IMR-90 (cell line): ENCODE measurements at regions of chr2 and their contacts with region 1.

Region 1: DNA sequence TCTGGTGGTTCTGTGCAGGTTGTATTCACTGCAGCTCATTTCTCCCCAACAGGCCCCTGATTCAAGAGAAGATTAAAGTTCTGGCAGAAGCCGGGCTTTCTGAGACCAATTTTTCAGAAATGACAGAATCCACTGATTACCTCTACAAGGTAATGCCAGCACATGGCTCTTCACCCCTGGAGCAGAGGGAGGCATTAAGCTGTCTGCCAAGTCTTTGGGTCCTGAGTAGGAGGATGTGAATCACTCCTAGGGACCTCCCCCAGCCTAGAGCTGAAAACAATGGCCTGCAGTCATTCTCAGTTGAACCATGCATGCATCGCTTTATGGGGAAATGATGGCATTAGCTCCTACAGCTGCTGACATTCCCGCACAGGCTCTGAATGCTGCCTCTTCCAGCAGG is 20.5 kb upstream of the RPL37A start:
- DNase-seq: peak; percentile 88
- ATAC-seq: peak; percentile 91
- H3K4me3 ChIP-seq: no peak overlapping the region
- H3K27ac ChIP-seq: no peak overlapping the region
- H3K4me1 ChIP-seq: no peaks in the 10 kb centered on the region; the same call in 1 of the 2 replicates
- H3K27me3 ChIP-seq: no peaks in the 10 kb centered on the region
- CTCF ChIP-seq: no peak
- POLR2A ChIP-seq: no peak
- RAD21 ChIP-seq: no peak

Region 2: DNA sequence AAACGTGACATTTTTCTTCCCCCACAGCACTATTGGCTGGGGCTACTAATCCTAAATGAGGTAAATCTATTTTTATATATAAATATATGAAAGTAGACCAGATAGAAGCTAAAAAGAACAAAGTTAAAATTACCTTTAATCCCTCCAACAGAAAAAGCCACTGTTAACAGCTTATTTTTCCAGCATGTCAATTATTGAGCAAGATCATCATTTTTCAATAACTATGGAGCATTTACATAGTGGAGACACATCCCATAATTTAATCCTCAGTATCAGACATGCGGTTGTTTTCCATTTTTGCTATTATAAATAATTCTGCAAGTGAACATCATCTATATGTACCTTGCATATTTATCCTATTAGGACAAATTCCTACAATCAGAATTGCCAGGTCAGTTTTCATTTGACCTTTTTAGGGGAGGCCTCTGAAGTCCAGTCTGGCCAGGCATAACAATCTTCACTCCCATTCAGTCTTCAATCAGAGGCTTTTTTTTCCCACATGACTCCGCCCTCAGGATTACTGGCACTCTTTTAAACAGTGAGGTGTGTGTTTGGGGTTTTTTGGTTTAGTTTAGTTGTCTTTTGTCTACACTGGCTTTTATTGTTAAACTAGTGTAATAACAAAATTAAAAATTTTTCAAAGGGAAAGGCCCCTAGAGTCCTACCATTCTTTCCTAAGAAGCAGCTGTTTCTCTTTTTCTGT is 36.7 kb before region 1 on chr2:
- CTCF ChIA-PET with region 1: no interaction called
- POLR2A ChIA-PET with region 1: no interaction called
- dilution Hi-C with region 1: no loop called
- in situ Hi-C with region 1: no loop called
- intact Hi-C with region 1: loop called (anchors 5 kb)
- DNase-seq: no peak
- ATAC-seq: no peak
- H3K4me3 ChIP-seq: no peak overlapping the region
- H3K27ac ChIP-seq: no peak overlapping the region
- H3K4me1 ChIP-seq: peaks cover 3% of the 10 kb centered on the region
- H3K27me3 ChIP-seq: no peaks in the 10 kb centered on the region
- CTCF ChIP-seq: no peak
- POLR2A ChIP-seq: no peak
- RAD21 ChIP-seq: no peak